Mammary epithelial cell (primary cell): ENCODE measurements at regions of chr10 and their contacts with region 1.

Region 1: DNA sequence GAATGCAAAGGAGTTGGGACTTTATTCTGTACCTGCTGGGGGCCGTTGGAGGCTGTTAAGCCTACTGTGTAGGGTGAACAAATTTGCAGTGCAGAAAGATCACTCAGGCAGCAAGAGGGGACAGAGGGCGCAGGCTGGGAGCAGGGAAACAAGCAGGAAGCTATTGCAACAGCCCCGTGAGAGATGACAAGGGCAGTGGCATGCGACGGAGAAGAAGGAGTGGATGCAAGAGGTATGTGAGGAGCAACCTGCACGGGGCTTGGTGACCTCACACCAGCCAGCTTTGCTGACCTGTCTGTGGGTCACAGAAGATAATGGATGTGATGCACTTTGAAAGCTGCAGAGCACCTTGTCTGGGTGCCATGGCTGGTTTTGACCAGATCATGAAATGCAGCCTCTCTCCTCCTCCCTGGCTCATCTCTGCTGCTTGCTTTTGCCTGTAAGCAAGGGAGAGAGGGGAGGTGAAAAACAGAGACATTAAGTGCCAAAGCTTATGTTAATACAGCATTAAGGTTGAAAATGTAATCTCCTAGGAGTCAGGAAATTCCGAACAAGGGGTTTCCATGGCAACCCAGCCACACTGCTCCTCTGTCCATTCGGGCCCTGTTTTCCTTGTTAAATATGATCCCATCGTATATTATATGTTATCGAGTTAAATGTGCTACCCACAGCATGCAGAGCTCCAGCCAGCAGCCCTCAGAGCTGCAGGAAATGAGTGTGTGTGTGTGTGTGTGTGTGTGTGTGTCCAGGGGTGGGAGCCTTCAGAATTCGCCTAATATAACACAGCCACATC is 314.3 kb upstream of the ZMIZ1 start:
- DNase-seq: no peak
- H3K4me3 ChIP-seq: no peak overlapping the region
- H3K27ac ChIP-seq: no peak overlapping the region
- H3K4me1 ChIP-seq: peaks cover 17% of the 10 kb centered on the region
- H3K27me3 ChIP-seq: no peaks in the 10 kb centered on the region
- CTCF ChIP-seq: no peak

Region 2: DNA sequence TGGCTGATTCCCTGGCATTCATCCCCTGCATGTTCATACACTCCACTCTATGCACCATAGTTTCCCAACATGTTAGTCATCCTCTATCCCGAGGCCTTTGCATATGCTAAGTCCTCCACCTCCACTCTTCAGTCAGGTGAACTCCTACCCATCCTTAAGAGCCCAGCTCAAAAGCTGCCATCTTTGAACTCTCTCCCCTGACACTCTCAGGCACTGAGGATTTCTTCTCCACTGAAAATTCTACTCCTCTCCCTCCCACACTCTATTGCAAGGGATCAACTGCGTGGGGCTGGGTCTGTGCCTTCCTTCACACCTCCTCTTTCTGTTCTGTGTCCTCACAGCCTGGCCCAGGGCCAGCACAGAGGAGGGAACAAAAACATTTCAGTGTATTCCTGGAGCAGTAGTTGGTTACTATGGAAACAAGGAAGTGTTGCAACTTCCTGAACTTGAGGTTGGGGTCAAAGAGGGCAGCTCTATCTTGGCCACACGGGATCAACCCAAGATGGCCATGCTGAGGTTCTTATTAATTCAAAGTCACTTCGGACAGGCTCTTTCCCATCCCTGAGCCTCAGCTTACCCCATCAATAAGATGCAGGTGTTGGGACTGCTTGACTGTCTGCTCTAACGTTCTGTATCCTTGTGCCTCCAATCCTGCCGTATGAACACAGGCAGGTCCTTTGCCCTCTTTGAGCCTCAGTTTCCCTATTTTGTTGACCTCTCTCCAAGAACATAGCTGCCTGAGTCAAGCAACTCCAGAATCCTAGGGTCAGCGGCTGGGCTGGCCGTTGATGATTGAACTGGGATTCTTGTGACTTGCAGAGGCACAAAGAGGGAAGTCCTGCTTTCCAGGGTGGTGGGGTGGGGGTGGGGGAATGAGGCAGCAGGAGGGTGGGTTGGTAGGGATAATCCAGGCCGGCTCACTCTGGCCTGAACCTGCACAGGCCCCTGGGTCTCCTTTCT is 329.8 kb after region 1 on chr10:
- CTCF ChIA-PET with region 1: no interaction called
- dilution Hi-C with region 1: loop called (anchors 5 kb)
- in situ Hi-C with region 1: no loop called
- intact Hi-C with region 1: no loop called
- DNase-seq: peak; percentile 88
- H3K4me3 ChIP-seq: no peak overlapping the region
- H3K27ac ChIP-seq: peak overlapping the region; percentile 85
- H3K4me1 ChIP-seq: peaks cover 78% of the 10 kb centered on the region
- H3K27me3 ChIP-seq: no peaks in the 10 kb centered on the region
- CTCF ChIP-seq: no peak